Calu3 (cell line): ENCODE measurements at regions of chr7 and their contacts with region 1.

Region 1: GRCh38 chr7:94650162-94651051 is 5.5 kb downstream of the SGCE start:
- DNase-seq: no peak
- H3K4me3 Mint-ChIP-seq: no peak overlapping the region
- H3K27ac Mint-ChIP-seq: no peak overlapping the region
- H3K4me1 Mint-ChIP-seq: no peaks in the 10 kb centered on the region
- H3K27me3 Mint-ChIP-seq: no peaks in the 10 kb centered on the region
- CTCF ChIP-seq: no peak

Region 2: GRCh38 chr7:94509879-94510581 is 140.4 kb before region 1 on chr7:
- CTCF ChIA-PET with region 1: no interaction called
- intact Hi-C with region 1: loop called (anchors 5 kb)
- DNase-seq: peak; percentile 66
- H3K4me3 Mint-ChIP-seq: peak overlapping the region; percentile 81
- H3K27ac Mint-ChIP-seq: peak overlapping the region; percentile 70
- H3K4me1 Mint-ChIP-seq: peaks cover 6% of the 10 kb centered on the region
- H3K27me3 Mint-ChIP-seq: no peaks in the 10 kb centered on the region
- CTCF ChIP-seq: no peak

Region 3: DNA sequence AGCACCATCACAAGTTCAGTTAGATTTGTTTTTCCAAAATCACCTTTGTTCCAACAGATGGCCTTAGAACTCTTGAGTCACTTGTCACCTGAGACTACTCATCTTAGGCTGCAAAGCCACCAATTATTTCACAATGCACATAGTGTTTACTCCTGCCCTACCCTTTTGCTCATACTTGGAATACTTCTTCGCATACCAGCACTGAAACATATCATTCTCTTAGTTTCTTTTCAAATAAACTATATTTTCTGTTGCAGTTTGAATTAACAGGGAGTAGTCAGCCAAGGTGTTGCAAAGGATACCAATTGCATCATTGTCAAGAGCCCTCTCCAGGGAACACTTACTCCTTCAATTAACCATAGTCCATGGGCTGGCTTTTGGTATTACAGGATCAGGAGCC is 69.8 kb before region 1 on chr7:
- CTCF ChIA-PET with region 1: no interaction called
- intact Hi-C with region 1: loop called (anchors 5 kb)
- DNase-seq: peak; percentile 37
- H3K4me3 Mint-ChIP-seq: no peak overlapping the region
- H3K27ac Mint-ChIP-seq: peak overlapping the region; percentile 91
- H3K4me1 Mint-ChIP-seq: peaks cover 57% of the 10 kb centered on the region
- H3K27me3 Mint-ChIP-seq: no peaks in the 10 kb centered on the region
- CTCF ChIP-seq: no peak